CD4-positive, alpha-beta memory T cell (primary cell): ENCODE measurements at regions of chr22 and their contacts with region 1.

Region 1: GRCh38 chr22:20783844-20784723 is 10.2 kb downstream of the SERPIND1 start:
- DNase-seq: peak; percentile 35 to 61 (median 40)
- H3K4me3 ChIP-seq: no peak overlapping the region
- H3K4me3 Mint-ChIP-seq: no peak overlapping the region
- H3K27ac ChIP-seq: no peak overlapping the region
- H3K27ac Mint-ChIP-seq: peak overlapping the region in 4 of 7 donors; percentile 14 to 63 (median 35)
- H3K4me1 ChIP-seq: no peaks in the 10 kb centered on the region
- H3K4me1 Mint-ChIP-seq: peaks cover 0 to 7% (median 3%) of the 10 kb centered on the region in 4 donors
- H3K27me3 ChIP-seq: no peaks in the 10 kb centered on the region
- H3K27me3 Mint-ChIP-seq: no peaks in the 10 kb centered on the region

Region 2: GRCh38 chr22:20606041-20606783 is 177.9 kb before region 1 on chr22:
- CTCF ChIA-PET with region 1: interaction called, 6 read pairs
- POLR2A ChIA-PET with region 1: no interaction called
- intact Hi-C with region 1: loop called (anchors 1 kb)
- DNase-seq: peak; percentile 64 to 73 (median 71)
- H3K4me3 ChIP-seq: no peak overlapping the region
- H3K4me3 Mint-ChIP-seq: peak overlapping the region in 2 of 8 donors; percentile 9 to 17
- H3K27ac ChIP-seq: no peak overlapping the region
- H3K27ac Mint-ChIP-seq: peak overlapping the region in 3 of 7 donors; percentile 23 to 80 (median 53)
- H3K4me1 ChIP-seq: peaks cover 5% of the 10 kb centered on the region
- H3K4me1 Mint-ChIP-seq: peaks cover 4 to 11% (median 9%) of the 10 kb centered on the region in 4 donors
- H3K27me3 ChIP-seq: no peaks in the 10 kb centered on the region
- H3K27me3 Mint-ChIP-seq: peaks cover 0 to 2% of the 10 kb centered on the region in 2 donors

Region 3: DNA sequence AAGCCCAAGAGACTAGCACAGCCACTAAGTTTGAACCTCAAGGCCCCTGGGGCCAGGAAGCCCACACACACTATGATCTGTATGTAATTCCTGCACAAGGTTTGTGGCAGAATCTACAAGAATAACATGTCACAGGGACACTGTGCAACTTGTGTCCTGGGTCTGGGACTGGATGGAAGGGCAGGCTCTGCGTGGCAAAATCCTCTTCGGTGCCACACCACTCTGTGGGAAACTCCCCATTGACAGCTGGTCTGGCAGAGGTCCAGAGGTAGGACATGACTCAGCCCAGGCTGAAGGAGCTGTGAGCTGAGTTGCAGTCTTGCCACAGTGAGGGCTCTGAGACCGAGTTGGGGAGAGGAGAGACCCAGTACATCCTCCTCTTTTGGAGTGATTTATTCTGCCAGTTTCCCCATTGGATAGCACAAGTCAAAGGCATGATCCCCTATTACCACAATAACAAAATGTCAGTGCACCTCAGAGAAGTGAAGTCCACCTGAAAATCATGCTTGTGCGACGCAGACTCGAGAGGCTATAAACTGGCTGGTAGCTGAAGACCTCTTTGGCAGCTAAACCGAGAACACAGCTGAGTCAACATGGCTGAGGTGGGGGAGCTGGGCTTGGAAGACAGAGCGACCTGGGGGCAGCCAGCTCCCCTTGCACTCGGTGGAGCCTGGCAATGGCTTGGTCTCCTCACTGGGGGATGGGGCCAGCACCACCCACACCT is 33.5 kb before region 1 on chr22:
- CTCF ChIA-PET with region 1: no interaction called
- POLR2A ChIA-PET with region 1: no interaction called
- intact Hi-C with region 1: no loop called
- DNase-seq: peak in 2 of 5 donors; percentile 4 to 9
- H3K4me3 ChIP-seq: no peak overlapping the region
- H3K4me3 Mint-ChIP-seq: no peak overlapping the region
- H3K27ac ChIP-seq: no peak overlapping the region
- H3K27ac Mint-ChIP-seq: peak overlapping the region; percentile 9 to 83 (median 42)
- H3K4me1 ChIP-seq: no peaks in the 10 kb centered on the region
- H3K4me1 Mint-ChIP-seq: peaks cover 0 to 13% (median 3%) of the 10 kb centered on the region in 4 donors
- H3K27me3 ChIP-seq: no peaks in the 10 kb centered on the region
- H3K27me3 Mint-ChIP-seq: no peaks in the 10 kb centered on the region

Region 4: GRCh38 chr22:20810645-20811044 is 26.6 kb after region 1 on chr22:
- CTCF ChIA-PET with region 1: interaction called, 10 read pairs
- POLR2A ChIA-PET with region 1: no interaction called
- intact Hi-C with region 1: no loop called
- DNase-seq: no peak
- H3K4me3 ChIP-seq: no peak overlapping the region
- H3K4me3 Mint-ChIP-seq: no peak overlapping the region
- H3K27ac ChIP-seq: no peak overlapping the region
- H3K27ac Mint-ChIP-seq: peak overlapping the region in 3 of 7 donors; percentile 4 to 71 (median 43)
- H3K4me1 ChIP-seq: peaks cover 4% of the 10 kb centered on the region
- H3K4me1 Mint-ChIP-seq: peaks cover 0 to 2% (median 0%) of the 10 kb centered on the region in 4 donors
- H3K27me3 ChIP-seq: no peaks in the 10 kb centered on the region
- H3K27me3 Mint-ChIP-seq: no peaks in the 10 kb centered on the region